HepG2 (cell line): ENCODE measurements at regions of chr9 and their contacts with region 1.

Region 1: DNA sequence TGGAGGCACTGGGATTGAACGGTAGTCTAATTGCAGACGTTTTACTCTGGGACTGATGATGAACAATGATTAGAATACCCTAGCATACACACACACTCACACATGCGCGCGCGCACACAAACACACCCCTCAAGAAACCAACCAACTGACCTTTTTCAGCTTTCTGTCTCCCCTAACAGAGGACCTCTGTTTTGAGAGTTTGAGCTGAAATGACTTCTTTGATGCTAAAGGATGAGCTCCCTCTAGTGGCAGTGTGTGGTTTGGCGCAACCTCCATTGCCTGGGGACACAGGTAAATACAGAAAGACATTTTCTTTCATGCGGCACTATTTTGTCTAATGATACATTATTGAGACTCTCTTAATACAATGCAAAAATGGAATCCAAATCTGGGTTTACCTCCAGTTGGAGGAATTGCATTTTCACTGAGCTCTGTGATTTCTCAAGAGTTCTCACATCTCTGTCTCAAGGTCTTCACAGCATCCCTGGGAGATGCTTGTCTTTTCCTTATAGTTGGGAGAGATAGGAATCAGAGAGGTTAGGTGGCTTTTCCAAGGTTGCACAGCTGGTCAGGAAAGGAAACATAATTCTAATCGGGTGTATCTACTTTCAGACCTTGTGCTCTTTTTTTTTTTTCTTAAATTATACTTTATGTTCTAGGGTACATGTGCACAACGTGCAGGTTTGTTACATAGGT is 187.5 kb downstream of the TMEM38B start:
- DNase-seq: peak; percentile 65
- ATAC-seq: peak; percentile 96
- H3K4me3 ChIP-seq: no peak overlapping the region
- H3K27ac ChIP-seq: no peak overlapping the region
- H3K4me1 ChIP-seq: no peaks in the 10 kb centered on the region
- H3K27me3 ChIP-seq: peaks cover 0 to 1% of the 10 kb centered on the region in 2 experiments; a peak in 2 of 5 replicates
- CTCF ChIP-seq: peak; percentile 84
- EP300 ChIP-seq: no peak
- POLR2A ChIP-seq: no peak
- RAD21 ChIP-seq: peak; percentile 61

Region 2: DNA sequence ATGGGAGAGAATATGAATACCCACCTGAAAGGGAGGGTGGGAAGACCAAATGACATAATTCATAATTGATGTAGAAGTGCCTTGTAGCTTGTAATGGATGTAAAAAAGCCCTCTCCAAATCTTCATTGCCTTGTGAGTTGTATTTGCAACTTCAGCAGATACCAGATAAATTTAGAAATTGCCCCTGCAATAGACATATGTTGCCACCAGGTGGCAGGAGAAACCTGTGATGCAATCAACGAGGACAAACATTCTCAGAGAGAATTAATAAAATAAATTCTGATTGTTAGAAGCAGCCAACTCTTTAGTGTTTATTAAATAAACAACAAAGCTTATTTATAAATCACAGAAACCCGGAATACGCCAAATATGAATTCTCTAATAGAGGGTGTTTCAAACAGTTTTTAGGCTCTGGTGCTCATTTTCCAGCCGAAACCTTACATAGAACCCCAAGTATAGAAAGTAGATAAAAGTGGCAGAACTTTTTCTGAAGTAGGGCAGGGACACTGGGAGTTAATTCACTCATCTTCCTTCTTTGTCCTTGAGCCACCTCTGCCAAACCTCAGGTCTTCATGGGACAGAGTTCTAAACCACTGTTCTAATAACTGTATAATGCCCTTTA is 39.7 kb before region 1 on chr9:
- CTCF ChIA-PET with region 1: interaction called, 16 read pairs
- POLR2A ChIA-PET with region 1: no interaction called
- in situ Hi-C with region 1: loop called (anchors 5 kb)
- intact Hi-C with region 1: loop called (anchors 1 kb)
- DNase-seq: peak; percentile 16
- ATAC-seq: no peak
- H3K4me3 ChIP-seq: no peak overlapping the region
- H3K27ac ChIP-seq: no peak overlapping the region
- H3K4me1 ChIP-seq: no peaks in the 10 kb centered on the region
- H3K27me3 ChIP-seq: no peaks in the 10 kb centered on the region
- CTCF ChIP-seq: peak; percentile 70
- EP300 ChIP-seq: no peak
- POLR2A ChIP-seq: no peak
- RAD21 ChIP-seq: no peak

Region 3: DNA sequence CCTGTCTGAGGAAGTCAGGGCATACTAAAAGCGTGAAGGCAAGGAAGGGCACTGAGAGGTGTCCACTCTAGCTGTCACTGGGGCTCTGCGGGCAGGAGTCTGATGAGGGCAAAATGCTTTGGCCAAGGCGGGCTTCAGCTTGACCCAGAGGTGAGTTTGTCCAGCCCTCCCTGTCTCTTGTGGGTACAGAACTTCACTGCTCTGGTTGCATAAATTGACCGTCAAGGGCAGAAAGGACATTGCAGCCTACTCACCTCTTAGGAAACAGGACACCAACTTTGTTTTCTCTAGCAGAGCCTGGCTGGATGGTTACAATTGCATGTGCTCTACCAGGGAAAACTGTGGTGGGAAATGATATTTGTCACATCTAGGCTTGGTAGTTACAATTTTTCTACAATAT is 16.5 kb before region 1 on chr9:
- CTCF ChIA-PET with region 1: no interaction called
- POLR2A ChIA-PET with region 1: no interaction called
- in situ Hi-C with region 1: no loop called
- intact Hi-C with region 1: no loop called
- DNase-seq: no peak
- ATAC-seq: no peak; the same call in 2 of the 3 replicates
- H3K4me3 ChIP-seq: no peak overlapping the region
- H3K27ac ChIP-seq: no peak overlapping the region
- H3K4me1 ChIP-seq: no peaks in the 10 kb centered on the region
- H3K27me3 ChIP-seq: no peaks in the 10 kb centered on the region
- CTCF ChIP-seq: no peak
- EP300 ChIP-seq: no peak
- POLR2A ChIP-seq: no peak
- RAD21 ChIP-seq: no peak

Region 4: GRCh38 chr9:105957830-105958229 is 76.0 kb after region 1 on chr9:
- CTCF ChIA-PET with region 1: no interaction called
- POLR2A ChIA-PET with region 1: no interaction called
- in situ Hi-C with region 1: no loop called
- intact Hi-C with region 1: no loop called
- DNase-seq: no peak
- ATAC-seq: no peak
- H3K4me3 ChIP-seq: no peak overlapping the region
- H3K27ac ChIP-seq: no peak overlapping the region
- H3K4me1 ChIP-seq: no peaks in the 10 kb centered on the region
- H3K27me3 ChIP-seq: no peaks in the 10 kb centered on the region
- CTCF ChIP-seq: no peak
- EP300 ChIP-seq: no peak
- POLR2A ChIP-seq: no peak
- RAD21 ChIP-seq: no peak